ENCODE measurements at regions of chr19 and their contacts with region 1.

Region 1: DNA sequence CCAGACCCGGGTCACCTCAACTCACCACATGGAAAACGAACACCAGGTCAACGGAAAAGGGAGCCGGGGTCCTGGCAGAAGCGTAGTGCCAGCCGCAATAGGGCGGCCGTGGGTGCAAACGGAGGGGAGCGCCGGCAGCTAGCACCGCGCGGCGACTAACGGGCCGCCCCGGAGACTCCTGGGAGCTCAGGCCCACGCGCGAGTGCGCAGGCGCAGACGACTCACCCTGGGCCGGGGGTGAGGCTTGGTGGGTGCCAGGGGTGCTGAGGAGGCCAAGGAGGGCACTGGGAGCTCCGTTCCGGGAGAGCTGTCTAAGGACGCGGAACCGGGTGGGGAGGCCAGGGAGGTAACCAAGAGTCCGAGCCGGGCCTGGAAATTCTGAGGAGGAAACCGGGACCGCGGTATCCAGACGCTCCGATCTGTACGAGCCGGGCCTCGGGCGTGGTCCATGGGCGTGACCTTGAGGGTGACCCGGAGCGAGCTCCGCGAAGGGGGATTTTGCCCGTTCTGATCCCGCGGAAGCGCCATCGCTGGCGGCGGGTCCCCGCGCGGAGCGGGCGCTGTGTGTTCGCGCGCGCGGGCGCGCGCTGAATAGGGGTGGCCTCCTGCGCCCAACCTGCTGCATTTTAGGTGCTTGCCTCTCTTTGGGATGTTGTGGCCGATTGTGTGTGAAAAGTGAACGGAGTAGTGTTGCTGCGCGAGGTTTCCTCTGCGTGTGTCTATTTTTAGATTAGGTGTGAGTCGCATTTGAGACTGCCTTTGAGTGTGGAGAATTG is at the start of gene ZNF382:
- DNase-seq: peak; percentile 85 to 89 (median 86)
- H3K4me3 ChIP-seq: peak within 1 kb of the TSS; percentile 32 to 85
- H3K4me3 Mint-ChIP-seq: peak within 1 kb of the TSS; percentile 90 to 99 (median 96)
- H3K27ac ChIP-seq: peak within 1 kb of the TSS; percentile 91
- H3K27ac Mint-ChIP-seq: peak within 1 kb of the TSS; percentile 82 to 98 (median 92)
- H3K4me1 ChIP-seq: peaks cover 16% of the 10 kb centered on the region
- H3K4me1 Mint-ChIP-seq: peaks cover 17 to 33% (median 23%) of the 10 kb centered on the region in 4 donors
- H3K27me3 ChIP-seq: no peaks in the 10 kb centered on the region
- H3K27me3 Mint-ChIP-seq: peaks cover 0 to 1% of the 10 kb centered on the region in 2 donors
- total RNA-seq, gene ZNF382: 21.1 to 21.9 TPM

Region 2: GRCh38 chr19:36456831-36457230 is 148.5 kb before region 1 on chr19:
- CTCF ChIA-PET with region 1: no interaction called
- POLR2A ChIA-PET with region 1: no interaction called
- intact Hi-C with region 1: no loop called
- DNase-seq: no peak
- H3K4me3 ChIP-seq: no peak overlapping the region
- H3K4me3 Mint-ChIP-seq: no peak overlapping the region
- H3K27ac ChIP-seq: no peak overlapping the region
- H3K27ac Mint-ChIP-seq: no peak overlapping the region
- H3K4me1 ChIP-seq: no peaks in the 10 kb centered on the region
- H3K4me1 Mint-ChIP-seq: peaks cover 0 to 1% (median 0%) of the 10 kb centered on the region in 4 donors
- H3K27me3 ChIP-seq: no peaks in the 10 kb centered on the region
- H3K27me3 Mint-ChIP-seq: no peaks in the 10 kb centered on the region

Region 3: DNA sequence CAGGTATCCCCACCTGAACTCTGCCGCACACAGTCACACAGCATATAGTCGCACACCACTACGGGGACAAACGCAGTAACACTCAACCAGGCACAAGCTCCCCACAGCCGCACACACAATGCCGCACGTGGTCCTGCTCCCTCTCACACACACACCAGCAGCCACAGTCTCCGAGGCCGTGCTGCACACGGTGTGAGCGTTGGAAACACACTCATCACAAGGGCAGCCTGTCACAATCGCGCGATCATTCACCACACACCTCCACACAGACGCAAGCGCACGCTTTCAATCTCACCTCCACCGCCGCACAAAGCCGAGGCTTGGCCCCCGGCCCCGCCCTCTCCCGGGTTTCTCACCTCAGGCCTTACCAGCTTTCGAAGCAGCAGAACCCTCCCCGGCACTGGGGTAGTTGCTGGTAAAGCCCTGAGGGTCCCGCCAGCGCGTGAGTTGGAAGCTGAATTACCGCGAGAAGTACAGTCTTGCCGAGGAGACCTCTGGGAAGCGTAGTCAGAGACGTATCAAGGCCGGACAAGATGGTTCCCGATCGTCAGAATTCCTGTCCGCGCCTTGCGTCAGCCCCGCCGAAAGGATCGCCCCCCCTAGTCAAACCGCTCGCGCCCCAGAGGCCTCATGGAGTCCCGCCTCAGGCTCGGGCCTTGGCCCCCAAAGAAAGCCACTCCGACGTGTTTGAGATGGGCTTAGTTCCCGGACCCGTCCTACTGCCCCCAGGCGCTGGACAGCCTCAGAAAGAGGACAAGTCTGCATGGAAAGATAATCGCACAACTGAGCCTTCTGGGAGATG is 116.0 kb before region 1 on chr19 and contains the start of gene ZNF566:
- CTCF ChIA-PET with region 1: no interaction called
- POLR2A ChIA-PET with region 1: interaction called, 23 read pairs
- intact Hi-C with region 1: loop called (anchors 1 kb)
- DNase-seq: peak; percentile 94 to 98 (median 96)
- H3K4me3 ChIP-seq: peak within 1 kb of the TSS; percentile 92 to 99
- H3K4me3 Mint-ChIP-seq: peak within 1 kb of the TSS; percentile 97 to 100 (median 98)
- H3K27ac ChIP-seq: peak within 1 kb of the TSS; percentile 93
- H3K27ac Mint-ChIP-seq: peak within 1 kb of the TSS; percentile 98 to 99 (median 98)
- H3K4me1 ChIP-seq: peaks cover 24% of the 10 kb centered on the region
- H3K4me1 Mint-ChIP-seq: peaks cover 22 to 36% (median 28%) of the 10 kb centered on the region in 4 donors
- H3K27me3 ChIP-seq: no peaks in the 10 kb centered on the region
- H3K27me3 Mint-ChIP-seq: no peaks in the 10 kb centered on the region
- total RNA-seq, gene ZNF566: 25.9 to 30.6 TPM

Region 4: DNA sequence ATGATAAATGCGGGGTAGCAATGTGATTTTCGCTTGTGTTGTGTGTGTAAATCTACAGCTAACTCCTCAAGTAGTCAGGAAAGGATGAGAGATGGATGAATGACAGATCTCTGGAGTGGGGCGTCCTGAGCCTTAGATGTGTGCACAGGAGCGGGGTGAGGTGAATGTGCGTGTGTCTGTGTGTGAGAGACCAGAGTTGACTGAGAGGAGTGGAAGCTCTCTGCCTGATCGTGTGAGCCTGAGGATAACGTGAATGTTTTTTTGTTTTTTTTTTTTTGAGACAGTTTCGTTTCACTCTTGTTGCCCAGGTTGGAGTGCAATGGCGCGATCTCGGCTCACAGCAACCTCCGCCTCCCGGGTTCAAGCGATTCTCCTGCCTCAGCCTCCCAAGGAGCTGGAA is 60.5 kb after region 1 on chr19:
- CTCF ChIA-PET with region 1: interaction called, 3 read pairs
- POLR2A ChIA-PET with region 1: interaction called, 8 read pairs
- intact Hi-C with region 1: loop called (anchors 2 kb)
- DNase-seq: no peak
- H3K4me3 ChIP-seq: peak overlapping the region; percentile 76 to 100
- H3K4me3 Mint-ChIP-seq: peak overlapping the region; percentile 94 to 100 (median 99)
- H3K27ac ChIP-seq: peak overlapping the region; percentile 71
- H3K27ac Mint-ChIP-seq: peak overlapping the region in 6 of 7 donors; percentile 5 to 99 (median 94)
- H3K4me1 ChIP-seq: peaks cover 28% of the 10 kb centered on the region
- H3K4me1 Mint-ChIP-seq: peaks cover 24 to 45% (median 31%) of the 10 kb centered on the region in 4 donors
- H3K27me3 ChIP-seq: no peaks in the 10 kb centered on the region
- H3K27me3 Mint-ChIP-seq: no peaks in the 10 kb centered on the region

Region 5: GRCh38 chr19:36707134-36707533 is 101.8 kb after region 1 on chr19:
- CTCF ChIA-PET with region 1: no interaction called
- POLR2A ChIA-PET with region 1: no interaction called
- intact Hi-C with region 1: no loop called
- DNase-seq: no peak
- H3K4me3 ChIP-seq: no peak overlapping the region
- H3K4me3 Mint-ChIP-seq: peak overlapping the region in 1 of 8 donors; percentile 17
- H3K27ac ChIP-seq: no peak overlapping the region
- H3K27ac Mint-ChIP-seq: no peak overlapping the region
- H3K4me1 ChIP-seq: no peaks in the 10 kb centered on the region
- H3K4me1 Mint-ChIP-seq: peaks cover 0 to 3% (median 1%) of the 10 kb centered on the region in 4 donors
- H3K27me3 ChIP-seq: no peaks in the 10 kb centered on the region
- H3K27me3 Mint-ChIP-seq: no peaks in the 10 kb centered on the region

Region 6: DNA sequence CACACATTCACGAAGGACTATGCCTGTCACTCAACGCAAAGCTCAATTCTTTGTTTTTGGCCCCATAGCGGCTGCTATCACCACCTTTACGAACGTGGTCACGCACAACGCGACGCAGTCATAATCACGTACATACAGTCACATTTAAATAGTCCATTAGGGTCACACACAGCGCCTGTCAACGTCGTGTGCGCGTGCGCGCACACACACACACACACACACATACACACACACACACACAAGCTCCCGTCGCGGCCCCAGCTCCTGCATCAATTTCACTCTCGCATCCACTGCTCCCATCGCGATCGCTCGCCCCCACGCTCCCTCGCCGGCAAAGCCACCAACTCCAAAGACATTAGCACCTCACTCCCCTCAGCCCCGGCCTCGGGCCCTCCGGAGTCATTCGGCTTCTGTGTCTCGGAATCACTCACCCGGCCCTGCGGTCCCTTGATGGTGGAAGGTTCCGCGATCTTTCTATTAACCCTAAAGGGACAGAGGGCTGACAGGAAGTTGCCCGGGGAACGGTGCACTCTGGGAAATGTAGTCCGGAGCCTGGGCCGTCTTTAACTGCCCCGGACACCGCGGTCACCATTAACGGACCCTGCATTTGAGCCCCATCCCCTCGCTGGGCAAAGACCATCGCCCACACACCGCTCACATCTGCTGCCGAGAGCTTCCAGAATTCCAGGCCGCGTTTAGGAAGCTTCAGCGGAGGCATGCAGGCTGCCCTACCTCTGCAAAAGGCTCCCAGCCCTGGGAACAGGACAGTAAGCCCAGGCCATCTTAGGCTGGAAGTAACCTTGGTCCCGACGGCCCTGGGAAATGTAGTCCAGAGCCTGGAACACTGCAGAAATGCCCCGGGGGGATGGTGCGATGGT is 232.9 kb after region 1 on chr19 and contains the start of gene ZNF790:
- CTCF ChIA-PET with region 1: no interaction called
- POLR2A ChIA-PET with region 1: no interaction called
- intact Hi-C with region 1: loop called (anchors 1 kb)
- DNase-seq: peak; percentile 88 to 94 (median 91)
- H3K4me3 ChIP-seq: peak within 1 kb of the TSS; percentile 48 to 97
- H3K4me3 Mint-ChIP-seq: peak within 1 kb of the TSS in 4 of 8 donors; percentile 31 to 71 (median 44)
- H3K27ac ChIP-seq: peak within 1 kb of the TSS; percentile 73
- H3K27ac Mint-ChIP-seq: peak within 1 kb of the TSS in 2 of 7 donors; percentile 45 to 54
- H3K4me1 ChIP-seq: peaks cover 18% of the 10 kb centered on the region
- H3K4me1 Mint-ChIP-seq: peaks cover 0 to 13% (median 5%) of the 10 kb centered on the region in 4 donors
- H3K27me3 ChIP-seq: no peaks in the 10 kb centered on the region
- H3K27me3 Mint-ChIP-seq: no peaks in the 10 kb centered on the region
- total RNA-seq, gene ZNF790: 12.4 to 13.4 TPM

Region 7: DNA sequence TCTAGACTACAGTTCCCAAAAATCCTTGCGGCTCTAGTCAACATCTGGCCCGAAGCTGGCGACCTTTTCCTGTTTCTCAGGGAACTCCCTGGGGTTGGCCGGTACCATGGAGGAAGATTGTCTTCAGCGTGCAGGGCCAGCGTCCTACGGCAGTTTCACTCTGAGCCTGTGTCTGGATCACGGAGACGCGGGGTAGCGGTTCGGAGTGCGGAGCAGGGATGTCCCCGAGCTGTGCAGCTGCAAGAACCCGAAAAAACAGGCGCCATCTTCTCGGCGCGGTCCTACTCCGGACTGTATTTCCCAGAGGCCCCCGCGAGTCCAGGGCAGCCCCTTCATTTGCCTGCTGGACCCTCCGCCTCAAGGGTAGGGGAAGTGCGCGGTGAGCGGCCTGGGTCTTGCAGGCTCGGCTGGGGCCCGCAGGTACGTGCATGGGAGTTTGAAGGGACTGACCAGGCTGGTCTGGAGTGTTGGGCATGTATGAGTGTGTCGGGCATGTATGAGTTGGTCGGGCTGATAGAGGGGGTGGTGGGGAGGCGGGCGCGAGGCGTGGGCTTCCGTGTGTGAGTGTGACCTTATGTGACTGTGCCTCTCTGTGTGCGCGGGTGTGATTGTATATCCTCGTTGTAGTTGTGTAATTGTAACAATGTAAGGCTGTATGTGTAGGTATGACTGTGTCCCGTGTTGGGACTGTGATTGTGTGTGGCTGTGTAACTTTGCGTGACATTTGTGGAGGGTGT is 612.7 kb after region 1 on chr19 and contains the start of gene ZNF383:
- CTCF ChIA-PET with region 1: no interaction called
- POLR2A ChIA-PET with region 1: interaction called, 10 read pairs
- intact Hi-C with region 1: no loop called
- DNase-seq: peak; percentile 80 to 87 (median 83)
- H3K4me3 ChIP-seq: peak within 1 kb of the TSS; percentile 85 to 99
- H3K4me3 Mint-ChIP-seq: peak within 1 kb of the TSS; percentile 89 to 98 (median 91)
- H3K27ac ChIP-seq: peak within 1 kb of the TSS; percentile 80
- H3K27ac Mint-ChIP-seq: peak within 1 kb of the TSS; percentile 88 to 98 (median 96)
- H3K4me1 ChIP-seq: peaks cover 16% of the 10 kb centered on the region
- H3K4me1 Mint-ChIP-seq: peaks cover 19 to 40% (median 31%) of the 10 kb centered on the region in 4 donors
- H3K27me3 ChIP-seq: no peaks in the 10 kb centered on the region
- H3K27me3 Mint-ChIP-seq: no peaks in the 10 kb centered on the region
- total RNA-seq, gene ZNF383: 32.0 to 34.0 TPM

Measured in CD4-positive, alpha-beta memory T cell (primary cell).